Activated T-helper 1 cell treated with anti-CD3 and anti-CD28 coated beads, Interleukin-12 subunit alpha, Interleukin-12 subunit beta, Interleukin-2, Interleukin-4 antibody, amounts not matched to agents 30 ng/mL and 10 ng/mL and 1 ng/mL, durations not matched to agents 14 hours and 24 hours and 36 hours (primary cell): ENCODE measurements at regions of chr14 and their contacts with region 1.

Region 1: GRCh38 chr14:75522224-75522982 is at the start of gene BATF:
- DNase-seq: peak; percentile 79
- H3K4me3 Mint-ChIP-seq: peak within 1 kb of the TSS; percentile 96
- H3K27ac Mint-ChIP-seq: peak within 1 kb of the TSS; percentile 95
- H3K4me1 Mint-ChIP-seq: peaks cover 71% of the 10 kb centered on the region
- H3K27me3 Mint-ChIP-seq: no peaks in the 10 kb centered on the region
- total RNA-seq, gene BATF: 213 and 214 TPM in 2 replicates

Region 2: GRCh38 chr14:75452900-75453747 is 69.3 kb before region 1 on chr14:
- intact Hi-C with region 1: no loop called
- DNase-seq: no peak
- H3K4me3 Mint-ChIP-seq: no peak overlapping the region
- H3K27ac Mint-ChIP-seq: no peak overlapping the region
- H3K4me1 Mint-ChIP-seq: peaks cover 6% of the 10 kb centered on the region
- H3K27me3 Mint-ChIP-seq: no peaks in the 10 kb centered on the region

Region 3: DNA sequence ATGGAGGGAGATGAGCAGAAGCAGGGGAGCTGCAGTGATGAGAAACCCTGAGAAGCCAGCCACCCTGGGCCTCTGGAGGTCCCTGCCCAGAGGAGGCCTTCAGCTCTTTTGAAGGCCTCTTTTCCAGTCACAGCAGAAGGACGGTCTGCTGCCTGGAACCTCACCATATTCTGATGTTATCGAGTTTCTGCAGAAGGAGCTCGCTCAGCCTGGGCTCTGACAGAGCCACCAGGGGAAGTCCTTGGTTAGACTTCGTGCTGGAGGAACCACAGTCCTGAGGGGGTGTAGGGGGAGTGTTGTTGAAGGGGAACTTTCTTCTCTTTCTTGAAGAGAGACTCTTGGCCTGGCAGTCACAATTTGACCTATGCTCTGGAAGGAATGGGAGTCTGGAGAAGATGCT is 25.2 kb before region 1 on chr14:
- intact Hi-C with region 1: loop called (anchors 1 kb)
- DNase-seq: peak; percentile 58
- H3K4me3 Mint-ChIP-seq: peak overlapping the region; percentile 66
- H3K27ac Mint-ChIP-seq: peak overlapping the region; percentile 89
- H3K4me1 Mint-ChIP-seq: peaks cover 61% of the 10 kb centered on the region
- H3K27me3 Mint-ChIP-seq: no peaks in the 10 kb centered on the region

Region 4: GRCh38 chr14:75560962-75561432 is 38.6 kb after region 1 on chr14:
- intact Hi-C with region 1: loop called (anchors 1 kb)
- DNase-seq: no peak
- H3K4me3 Mint-ChIP-seq: peak overlapping the region; percentile 15
- H3K27ac Mint-ChIP-seq: peak overlapping the region; percentile 93
- H3K4me1 Mint-ChIP-seq: peaks cover 68% of the 10 kb centered on the region
- H3K27me3 Mint-ChIP-seq: no peaks in the 10 kb centered on the region

Region 5: GRCh38 chr14:75654127-75654732 is 131.8 kb after region 1 on chr14:
- intact Hi-C with region 1: loop called (anchors 1 kb)
- DNase-seq: peak; percentile 74
- H3K4me3 Mint-ChIP-seq: no peak overlapping the region
- H3K27ac Mint-ChIP-seq: no peak overlapping the region
- H3K4me1 Mint-ChIP-seq: peaks cover 20% of the 10 kb centered on the region
- H3K27me3 Mint-ChIP-seq: no peaks in the 10 kb centered on the region